RWPE1 (cell line): ENCODE measurements at regions of chr11 and their contacts with region 1.

Region 1: DNA sequence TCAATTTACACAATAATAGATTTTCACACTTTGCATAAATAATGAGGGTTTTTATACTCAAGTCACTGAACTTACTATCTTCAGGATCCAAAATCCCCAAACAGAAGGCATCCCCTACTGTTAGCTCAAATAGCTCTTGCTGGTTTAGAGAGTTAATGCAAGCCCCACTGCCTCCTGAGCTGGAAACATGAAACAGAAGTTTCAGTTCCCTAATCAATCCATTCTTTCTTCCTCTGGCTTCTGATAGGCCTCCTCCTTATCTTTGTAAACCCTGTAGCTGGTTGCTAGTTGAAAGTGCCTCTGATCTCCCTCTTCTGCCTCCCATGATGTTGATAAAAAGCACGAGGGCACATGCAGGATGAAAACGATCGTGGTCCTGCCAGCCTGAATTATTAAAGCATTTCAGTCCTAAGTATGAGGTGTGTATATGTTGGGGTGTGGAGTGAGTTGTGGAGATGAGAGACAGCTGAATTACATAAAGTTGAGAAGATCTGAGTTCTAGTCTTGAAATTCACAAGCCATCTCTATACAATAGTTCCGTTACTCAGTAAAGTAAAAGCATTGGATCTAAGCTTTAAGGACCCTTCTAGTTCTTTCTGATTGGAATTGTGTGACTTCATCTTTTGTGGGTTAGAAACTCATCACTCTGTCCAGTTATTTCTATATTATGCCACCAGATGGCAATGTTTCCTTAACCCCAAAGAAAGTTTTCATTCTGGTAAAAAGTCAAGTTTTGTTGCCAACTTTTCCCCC is 35.0 kb upstream of the EHF start:
- DNase-seq: peak; percentile 70
- H3K27ac ChIP-seq: no peak overlapping the region
- CTCF ChIP-seq: peak; percentile 74

Region 2: DNA sequence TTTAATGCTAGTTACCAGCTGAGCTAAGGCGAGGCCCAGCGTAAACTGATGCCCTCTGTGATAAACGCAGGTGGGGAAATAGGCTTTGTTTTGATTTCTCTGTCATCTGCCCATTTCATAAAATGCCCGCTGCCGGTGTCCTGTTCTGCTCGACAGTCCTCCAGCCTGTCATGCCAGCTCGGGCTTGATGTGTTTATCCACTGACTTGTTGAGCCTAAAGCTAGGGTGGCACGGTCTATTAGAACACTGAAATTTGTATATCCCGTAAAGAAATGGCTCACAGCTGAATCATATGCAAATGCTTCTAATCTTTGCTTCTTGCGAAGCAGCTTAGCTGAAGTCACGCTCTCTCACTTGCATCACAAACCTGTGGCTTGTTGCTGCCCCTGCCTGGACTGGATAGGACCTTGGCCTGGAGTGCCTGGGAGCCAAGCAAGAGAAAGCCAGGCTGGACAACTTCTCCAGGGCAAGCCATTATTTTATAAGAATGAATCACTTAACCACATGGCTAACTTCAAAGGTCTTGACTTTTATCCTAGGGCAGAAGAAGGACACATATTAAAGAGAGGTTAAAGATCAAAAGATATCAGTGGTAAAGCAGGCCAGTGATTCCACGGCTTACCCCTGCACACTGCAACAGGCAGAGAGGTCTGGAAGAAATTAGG is 68.0 kb after region 1 on chr11:
- CTCF ChIA-PET with region 1: interaction called, 12 read pairs
- POLR2A ChIA-PET with region 1: no interaction called
- DNase-seq: peak; percentile 76
- H3K27ac ChIP-seq: peak overlapping the region; percentile 90
- CTCF ChIP-seq: peak; percentile 5; the same call in 1 of the 2 replicates

Region 3: DNA sequence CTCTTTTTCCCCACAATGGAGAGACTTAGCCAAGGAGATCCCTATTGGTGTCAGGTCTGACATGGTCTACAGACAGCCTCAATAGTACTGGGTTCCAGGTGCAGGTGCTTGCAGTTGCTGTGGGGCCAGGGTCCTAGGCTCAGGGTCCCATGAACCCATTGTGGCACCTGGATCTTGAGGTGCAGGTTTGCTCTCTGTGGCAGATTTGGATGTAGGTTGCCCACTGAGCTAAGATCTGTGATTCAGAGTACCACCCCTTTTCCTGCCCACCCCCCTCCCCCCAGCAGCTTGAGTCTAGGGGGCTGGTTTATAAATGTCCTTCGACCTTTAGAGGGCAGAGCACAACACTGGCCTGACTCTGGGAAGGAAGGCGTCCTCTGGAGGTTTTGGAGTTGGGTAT is 183.3 kb after region 1 on chr11:
- CTCF ChIA-PET with region 1: no interaction called
- POLR2A ChIA-PET with region 1: no interaction called
- DNase-seq: no peak
- H3K27ac ChIP-seq: no peak overlapping the region
- CTCF ChIP-seq: no peak

Region 4: GRCh38 chr11:34890812-34891211 is 304.9 kb after region 1 on chr11:
- CTCF ChIA-PET with region 1: interaction called, 12 read pairs
- POLR2A ChIA-PET with region 1: no interaction called
- DNase-seq: peak; percentile 34
- H3K27ac ChIP-seq: no peak overlapping the region
- CTCF ChIP-seq: peak; percentile 39